GM10248 (cell line): ENCODE measurements at regions of chr10 and their contacts with region 1.

Region 1: GRCh38 chr10:125734823-125735222 is 15.3 kb downstream of the EDRF1 start:
- DNase-seq: no peak
- CTCF ChIP-seq: no peak

Region 2: GRCh38 chr10:125747417-125747816 is 12.6 kb after region 1 on chr10:
- CTCF ChIA-PET with region 1: interaction called, 10 read pairs
- POLR2A ChIA-PET with region 1: no interaction called
- DNase-seq: no peak
- CTCF ChIP-seq: no peak

Region 3: DNA sequence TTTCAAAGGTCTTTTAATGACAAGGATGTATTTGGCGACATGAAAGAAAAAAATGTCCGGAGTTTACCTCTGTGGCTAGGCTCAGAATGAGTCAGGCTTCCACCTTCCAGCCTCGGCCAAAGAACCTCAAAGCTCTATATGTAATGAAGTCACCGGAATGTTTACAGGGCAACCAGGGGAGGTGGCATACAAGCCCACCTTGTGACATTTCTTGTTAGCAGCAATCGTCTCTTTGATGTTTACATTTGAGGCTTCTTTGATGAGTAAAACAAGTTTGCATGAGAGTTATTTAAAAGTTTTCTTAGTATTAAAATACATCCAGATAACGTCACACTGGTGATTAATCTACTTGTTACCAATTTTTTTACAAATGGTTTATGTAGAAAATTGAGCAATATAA is 786.5 kb after region 1 on chr10:
- CTCF ChIA-PET with region 1: no interaction called
- POLR2A ChIA-PET with region 1: no interaction called
- DNase-seq: no peak
- CTCF ChIP-seq: no peak